H1 (cell line): ENCODE measurements at regions of chr20 and their contacts with region 1.

Region 1: DNA sequence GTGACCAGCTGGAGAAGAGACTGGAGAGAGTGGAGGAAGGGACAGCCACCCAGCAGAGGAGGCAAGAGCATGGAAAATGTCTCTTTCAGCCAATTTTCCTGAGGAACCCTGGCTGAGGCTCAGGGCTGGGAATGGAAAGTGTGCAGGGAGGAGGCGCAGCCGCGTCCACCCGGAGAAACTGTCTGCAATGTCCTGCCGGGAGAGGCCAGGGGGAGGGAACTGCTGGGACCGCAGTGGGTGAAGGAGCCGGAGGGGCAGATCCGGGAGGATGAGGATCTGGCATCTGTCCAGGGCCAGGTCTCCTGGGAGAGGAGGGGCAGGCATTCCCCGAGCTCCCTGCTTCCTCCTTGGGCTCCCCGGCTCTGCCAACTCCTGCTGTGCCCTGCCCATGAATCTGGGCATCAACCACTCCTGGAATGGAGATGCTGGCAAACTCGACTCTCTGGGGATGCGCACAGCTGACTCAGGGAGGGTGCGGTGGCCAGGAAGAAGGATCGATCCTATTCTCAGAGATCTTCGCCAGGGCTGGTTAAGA is 17.4 kb upstream of the HM13 start:
- DNase-seq: no peak
- H3K4me3 ChIP-seq: no peak overlapping the region
- H3K27ac ChIP-seq: no peak overlapping the region
- H3K4me1 ChIP-seq: no peaks in the 10 kb centered on the region
- H3K27me3 ChIP-seq: no peaks in the 10 kb centered on the region
- CTCF ChIP-seq: no peak
- EP300 ChIP-seq: no peak
- POLR2A ChIP-seq: no peak
- RAD21 ChIP-seq: no peak

Region 2: GRCh38 chr20:31454365-31454764 is 42.5 kb before region 1 on chr20:
- CTCF ChIA-PET with region 1: interaction called, 10 read pairs
- POLR2A ChIA-PET with region 1: no interaction called
- DNase-seq: no peak
- H3K4me3 ChIP-seq: no peak overlapping the region
- H3K27ac ChIP-seq: no peak overlapping the region
- H3K4me1 ChIP-seq: no peaks in the 10 kb centered on the region; a peak in 1 of 7 replicates
- H3K27me3 ChIP-seq: no peaks in the 10 kb centered on the region
- CTCF ChIP-seq: no peak
- EP300 ChIP-seq: no peak
- POLR2A ChIP-seq: no peak
- RAD21 ChIP-seq: no peak